ENCODE measurements at regions of chr5 and their contacts with region 1.

Region 1: GRCh38 chr5:108919591-108920326 is 172.1 kb downstream of the FER start:
- DNase-seq: no peak
- H3K4me3 ChIP-seq: no peak overlapping the region
- H3K27ac ChIP-seq: no peak overlapping the region
- H3K4me1 ChIP-seq: peaks cover 12% of the 10 kb centered on the region
- H3K27me3 ChIP-seq: no peaks in the 10 kb centered on the region
- CTCF ChIP-seq: peak in 1 of 2 donors; percentile 37

Region 2: GRCh38 chr5:109161914-109162683 is 242.3 kb after region 1 on chr5:
- CTCF ChIA-PET with region 1: no interaction called
- dilution Hi-C with region 1: no loop called
- in situ Hi-C with region 1: no loop called
- intact Hi-C with region 1: no loop called
- DNase-seq: peak; percentile 11
- H3K4me3 ChIP-seq: no peak overlapping the region
- H3K27ac ChIP-seq: peak overlapping the region; percentile 74
- H3K4me1 ChIP-seq: peaks cover 8% of the 10 kb centered on the region
- H3K27me3 ChIP-seq: no peaks in the 10 kb centered on the region
- CTCF ChIP-seq: no peak

Region 3: GRCh38 chr5:109479260-109479860 is 559.6 kb after region 1 on chr5:
- CTCF ChIA-PET with region 1: no interaction called
- dilution Hi-C with region 1: no loop called
- in situ Hi-C with region 1: no loop called
- intact Hi-C with region 1: loop called (anchors 10 kb)
- DNase-seq: no peak
- H3K4me3 ChIP-seq: no peak overlapping the region
- H3K27ac ChIP-seq: no peak overlapping the region
- H3K4me1 ChIP-seq: no peaks in the 10 kb centered on the region
- H3K27me3 ChIP-seq: no peaks in the 10 kb centered on the region
- CTCF ChIP-seq: peak; percentile 57 to 59

Measured in mammary epithelial cell (primary cell).